Mammary epithelial cell (primary cell): ENCODE measurements at regions of chr22 and their contacts with region 1.

Region 1: DNA sequence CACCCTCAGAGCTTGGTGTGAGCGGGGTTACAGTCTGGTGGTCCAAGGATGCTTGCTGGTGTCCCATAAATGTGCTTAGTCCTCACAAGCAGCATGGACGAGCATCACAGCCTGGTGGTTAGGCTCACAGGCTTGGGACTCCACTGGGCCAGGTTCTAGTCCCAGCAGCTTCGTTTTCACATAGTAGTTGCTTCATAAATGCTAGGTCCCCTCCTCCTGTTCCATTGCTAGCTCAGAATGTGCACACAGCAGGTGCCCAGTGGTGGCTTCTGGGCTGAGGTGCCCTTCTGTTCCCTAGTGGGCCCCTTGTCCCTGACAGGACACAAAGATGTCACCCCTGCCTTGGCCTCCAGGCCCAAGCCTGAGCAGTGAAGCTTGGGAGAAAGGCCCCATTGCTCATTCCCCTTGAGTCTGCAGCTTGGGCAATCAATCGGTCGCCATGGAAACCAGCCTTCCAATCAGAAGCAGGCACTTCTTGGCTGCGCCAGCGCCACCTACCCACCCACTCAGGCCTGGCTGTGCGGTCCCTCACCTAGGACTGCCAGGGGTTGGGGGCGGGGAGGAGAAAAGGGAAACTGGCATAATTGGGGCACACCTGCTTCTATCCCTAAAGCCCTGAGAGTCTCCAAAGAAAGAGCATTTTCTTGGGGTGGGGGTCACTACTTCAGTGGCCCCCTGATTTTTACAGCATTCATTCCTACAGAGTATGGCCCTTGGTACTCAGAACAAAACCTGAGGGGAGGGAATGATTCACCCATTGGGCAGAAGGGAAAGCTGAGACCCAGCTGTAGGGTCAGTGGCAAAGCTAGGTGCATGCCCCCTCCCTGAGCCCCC is 48.1 kb downstream of the CYTH4 start:
- DNase-seq: peak; percentile 65
- H3K4me3 ChIP-seq: no peak overlapping the region
- H3K27ac ChIP-seq: peak overlapping the region; percentile 85
- H3K4me1 ChIP-seq: peaks cover 55% of the 10 kb centered on the region
- H3K27me3 ChIP-seq: no peaks in the 10 kb centered on the region
- CTCF ChIP-seq: peak in 1 of 2 donors; percentile 59

Region 2: GRCh38 chr22:37218771-37219411 is 111.5 kb before region 1 on chr22:
- CTCF ChIA-PET with region 1: no interaction called
- dilution Hi-C with region 1: no loop called
- in situ Hi-C with region 1: no loop called
- intact Hi-C with region 1: no loop called
- DNase-seq: no peak
- H3K4me3 ChIP-seq: no peak overlapping the region
- H3K27ac ChIP-seq: no peak overlapping the region
- H3K4me1 ChIP-seq: no peaks in the 10 kb centered on the region
- H3K27me3 ChIP-seq: no peaks in the 10 kb centered on the region
- CTCF ChIP-seq: no peak

Region 3: DNA sequence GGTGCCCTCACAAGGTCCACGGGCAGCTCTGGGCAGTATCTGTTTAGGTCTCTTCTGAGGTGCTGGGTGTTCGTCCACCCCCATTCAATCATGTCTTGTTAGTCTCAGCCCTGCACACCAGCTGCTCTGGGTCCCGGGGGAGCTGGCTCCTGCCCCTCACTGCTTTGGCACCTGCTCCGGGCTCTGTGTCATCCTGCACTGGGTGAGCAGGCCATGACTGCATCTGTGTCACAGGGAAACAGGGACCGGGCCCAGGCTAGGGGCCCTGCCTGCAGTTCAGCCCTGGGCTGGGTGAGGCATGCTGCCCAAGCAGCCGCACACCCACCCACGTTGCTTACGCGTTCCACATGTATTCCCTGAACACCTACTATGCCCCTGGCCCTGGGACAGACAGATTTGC is 52.9 kb after region 1 on chr22:
- CTCF ChIA-PET with region 1: no interaction called
- dilution Hi-C with region 1: no loop called
- in situ Hi-C with region 1: no loop called
- intact Hi-C with region 1: loop called (anchors 5 kb)
- DNase-seq: no peak
- H3K4me3 ChIP-seq: no peak overlapping the region
- H3K27ac ChIP-seq: no peak overlapping the region
- H3K4me1 ChIP-seq: peaks cover 6% of the 10 kb centered on the region
- H3K27me3 ChIP-seq: no peaks in the 10 kb centered on the region
- CTCF ChIP-seq: no peak

Region 4: DNA sequence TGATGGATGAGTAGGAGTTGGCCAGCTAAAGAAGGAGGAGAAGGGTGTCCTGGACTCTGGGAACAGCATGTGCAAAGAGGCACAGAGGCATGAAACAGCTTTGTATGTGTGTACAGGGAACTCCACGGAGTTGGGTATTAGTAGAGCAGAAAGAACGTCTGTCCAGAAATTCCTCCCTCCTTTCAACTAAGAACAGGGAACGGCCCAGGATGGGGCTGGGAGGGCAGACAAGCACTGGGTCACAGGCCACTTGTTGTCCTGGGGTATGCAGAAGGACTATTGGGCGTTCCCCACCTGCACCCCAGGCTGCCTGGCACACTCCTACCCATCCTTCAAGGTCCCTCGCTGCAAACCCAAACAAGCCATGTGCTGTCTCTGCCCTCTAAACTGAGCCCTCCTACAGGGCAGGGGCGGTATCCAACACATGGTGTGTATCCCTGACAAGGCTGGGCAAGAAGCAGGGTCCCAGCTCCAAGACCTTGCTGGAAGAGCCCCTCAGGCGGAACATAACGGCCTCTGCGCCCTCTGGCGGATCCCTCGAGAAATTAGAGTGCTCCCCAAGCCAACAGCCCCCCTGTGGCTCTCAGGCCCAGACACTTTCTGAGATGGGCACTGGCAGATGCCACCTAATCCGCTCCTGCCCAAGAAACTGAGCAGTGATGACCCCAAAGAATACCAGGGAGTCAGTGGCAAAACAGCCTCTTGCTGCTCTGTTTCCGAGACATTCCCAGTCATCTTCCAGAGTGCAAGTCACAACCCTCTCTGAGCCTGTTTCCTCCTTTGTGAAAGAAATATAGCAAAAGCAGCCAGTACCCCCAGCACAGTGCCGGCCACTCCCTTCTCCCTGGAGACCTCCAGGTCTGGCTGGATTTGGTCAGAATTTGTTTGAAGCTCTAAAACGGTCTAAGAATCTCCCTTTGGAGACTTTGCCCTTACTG is 98.5 kb after region 1 on chr22:
- CTCF ChIA-PET with region 1: no interaction called
- dilution Hi-C with region 1: no loop called
- in situ Hi-C with region 1: loop called in 1 of 2 experiments (anchors 5 kb)
- intact Hi-C with region 1: loop called (anchors 1 kb)
- DNase-seq: no peak
- H3K4me3 ChIP-seq: no peak overlapping the region
- H3K27ac ChIP-seq: no peak overlapping the region
- H3K4me1 ChIP-seq: peaks cover 36% of the 10 kb centered on the region
- H3K27me3 ChIP-seq: no peaks in the 10 kb centered on the region
- CTCF ChIP-seq: peak; percentile 49 to 65

Region 5: DNA sequence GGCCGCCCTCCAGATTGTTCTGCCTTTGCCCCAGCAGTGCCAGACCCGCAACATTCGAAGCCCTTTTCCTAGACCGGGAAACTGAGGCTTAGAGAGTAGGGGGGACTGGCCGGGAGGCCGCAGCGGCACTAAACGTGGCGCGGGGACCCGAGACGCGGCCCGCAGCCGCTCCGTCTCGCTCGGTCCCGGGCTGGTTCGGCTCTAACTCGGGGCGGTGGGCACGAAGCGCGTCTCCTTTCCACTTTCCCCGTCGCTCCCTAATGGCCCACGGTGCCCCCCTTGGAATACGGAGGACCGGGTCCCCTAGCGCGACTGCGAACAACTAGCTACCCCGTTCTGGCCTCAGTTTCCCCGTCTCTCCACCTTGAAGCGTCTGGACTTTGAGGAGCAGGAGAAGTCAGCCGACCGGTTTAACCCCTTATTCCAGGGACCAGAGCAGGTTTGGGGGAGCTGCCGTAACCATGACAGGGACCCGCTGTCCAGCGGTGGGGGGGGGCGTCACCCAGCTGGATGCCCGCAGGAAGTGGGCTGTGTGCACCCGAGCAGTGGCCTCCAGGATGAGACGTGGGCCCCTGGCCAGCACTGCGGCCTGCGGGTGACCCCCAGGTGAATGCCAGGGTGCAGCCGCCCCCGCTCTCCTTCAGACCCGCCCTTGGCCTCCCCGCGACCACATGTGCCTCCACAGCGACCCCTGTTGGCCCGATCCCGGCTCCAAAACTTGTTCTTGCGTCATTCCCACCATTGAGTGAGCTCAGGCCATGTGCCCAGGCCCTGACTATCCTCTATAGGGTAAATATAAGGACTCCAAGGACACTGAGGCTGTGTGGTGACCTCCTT is 231.0 kb after region 1 on chr22:
- CTCF ChIA-PET with region 1: interaction called, 14 read pairs
- dilution Hi-C with region 1: no loop called
- in situ Hi-C with region 1: no loop called
- intact Hi-C with region 1: no loop called
- DNase-seq: peak; percentile 89
- H3K4me3 ChIP-seq: peak overlapping the region; percentile 71 to 91 (median 78)
- H3K27ac ChIP-seq: peak overlapping the region; percentile 90
- H3K4me1 ChIP-seq: peaks cover 46% of the 10 kb centered on the region
- H3K27me3 ChIP-seq: no peaks in the 10 kb centered on the region
- CTCF ChIP-seq: peak; percentile 79 to 88